Prostate gland (tissue), 2 donors: ENCODE measurements at regions of chr19 and their contacts with region 1.

Region 1: DNA sequence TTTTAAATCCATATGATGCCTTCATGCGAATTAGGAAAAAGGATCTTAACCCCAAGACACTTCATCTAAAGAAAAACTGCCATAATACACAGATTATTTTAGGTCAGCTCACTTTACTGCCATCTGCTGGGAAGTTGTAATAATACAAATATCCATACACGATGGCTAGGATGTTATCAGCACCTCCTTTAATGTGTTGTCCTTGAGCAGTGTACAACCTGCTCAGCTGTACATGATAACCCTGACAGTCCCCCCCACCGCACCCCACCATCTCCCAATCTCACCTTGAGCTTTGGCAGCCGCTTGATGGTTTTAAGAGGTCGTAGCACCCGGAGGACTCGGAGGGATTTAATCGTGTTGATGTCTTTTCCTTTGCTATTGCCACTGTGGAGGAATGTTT is 112.2 kb downstream of the IER2 start:
- DNase-seq: no peak
- H3K4me3 ChIP-seq: no peak overlapping the region
- H3K27ac ChIP-seq: no peak overlapping the region
- H3K4me1 ChIP-seq: no peaks in the 10 kb centered on the region
- H3K27me3 ChIP-seq: no peaks in the 10 kb centered on the region
- CTCF ChIP-seq: peak in 3 of 4 experiments; percentile 54 to 77 (median 75)
- POLR2A ChIP-seq: no peak

Region 2: DNA sequence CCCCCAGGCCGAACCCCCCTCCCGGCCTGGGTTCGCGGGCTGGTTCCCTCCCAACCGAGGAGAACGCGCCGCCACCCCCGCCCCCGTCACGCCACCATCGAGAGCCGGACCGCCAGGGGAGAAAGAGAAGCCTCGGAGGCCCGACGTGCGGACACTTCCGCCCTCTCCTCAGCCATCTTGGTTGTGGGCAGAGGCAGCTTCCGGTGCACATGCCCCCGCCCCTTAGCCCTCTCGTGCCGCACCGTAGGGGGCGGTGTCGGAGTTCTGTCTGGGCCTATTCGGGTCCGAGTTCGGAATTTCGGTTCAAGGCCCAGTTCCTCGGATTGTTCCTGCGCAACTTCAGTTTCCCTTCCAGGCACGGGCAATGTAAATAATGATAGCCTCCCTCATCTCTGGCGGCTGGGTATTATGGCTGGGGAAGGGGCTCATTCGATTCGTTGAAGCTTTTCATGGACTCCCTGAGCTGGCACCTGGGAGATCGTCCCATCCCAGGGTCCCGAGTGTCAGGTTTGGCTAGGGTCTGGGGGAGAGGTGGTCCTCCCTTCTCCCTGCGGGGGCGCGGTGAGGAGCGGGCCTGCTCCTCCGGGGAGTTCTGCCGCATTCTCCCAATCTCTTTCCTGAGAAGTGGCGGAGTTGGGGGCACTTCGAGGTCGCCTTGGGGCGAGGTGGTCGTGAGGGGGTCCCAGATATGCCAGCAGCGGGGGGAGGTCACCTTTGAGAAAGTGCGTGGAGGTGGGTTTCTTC is 112.1 kb before region 1 on chr19 and contains the starts of genes IER2 and STX10:
- intact Hi-C with region 1: loop called (anchors 5 kb)
- DNase-seq: peak; percentile 95
- H3K4me3 ChIP-seq: peak within 1 kb of the TSS; percentile 83 to 92
- H3K27ac ChIP-seq: peak within 1 kb of the TSS; percentile 98 to 100
- H3K4me1 ChIP-seq: no peaks in the 10 kb centered on the region
- H3K27me3 ChIP-seq: no peaks in the 10 kb centered on the region
- CTCF ChIP-seq: peak; percentile 71 to 96 (median 84)
- POLR2A ChIP-seq: peak; percentile 81
- total RNA-seq, gene IER2: 34.7 to 75.7 TPM
- total RNA-seq, gene STX10: 42.5 to 48.6 TPM